OCI-LY7 (cell line): ENCODE measurements at regions of chr15 and their contacts with region 1.

Region 1: DNA sequence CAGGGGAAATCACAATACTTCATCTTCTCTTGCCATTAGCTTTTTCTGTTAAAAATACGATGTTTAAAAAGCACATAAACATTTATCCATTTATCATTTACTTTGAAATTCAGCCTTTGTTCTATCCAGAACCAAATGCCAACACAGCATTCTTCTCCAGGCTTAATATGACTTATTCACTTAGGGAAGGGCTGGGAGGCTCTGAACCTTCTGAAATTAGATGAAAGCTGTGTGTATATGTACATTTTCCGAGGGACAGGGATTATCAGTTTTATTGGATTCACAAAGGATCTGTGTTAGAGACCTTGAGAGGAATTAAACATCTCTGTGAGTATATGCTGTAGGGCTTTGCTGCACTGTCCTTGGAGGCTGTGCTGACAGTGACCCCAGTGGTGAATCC is 210.6 kb upstream of the UBE3A start:
- DNase-seq: no peak
- H3K4me3 ChIP-seq: no peak overlapping the region
- H3K27ac ChIP-seq: no peak overlapping the region
- H3K4me1 ChIP-seq: no peaks in the 10 kb centered on the region
- CTCF ChIP-seq: no peak

Region 2: GRCh38 chr15:25208735-25209134 is 440.7 kb before region 1 on chr15:
- CTCF ChIA-PET with region 1: no interaction called
- POLR2A ChIA-PET with region 1: no interaction called
- intact Hi-C with region 1: loop called (anchors 5 kb)
- DNase-seq: no peak
- H3K4me3 ChIP-seq: no peak overlapping the region
- H3K27ac ChIP-seq: no peak overlapping the region
- H3K4me1 ChIP-seq: no peaks in the 10 kb centered on the region
- CTCF ChIP-seq: no peak